Activated CD4-positive, alpha-beta memory T cell treated with anti-CD3 and anti-CD28 coated beads, Interleukin-2, amount 10 ng/mL, durations not matched to agents 7 days and 5 days (primary cell): ENCODE measurements at regions of chr10 and their contacts with region 1.

Region 1: GRCh38 chr10:93376372-93377293 is 105.5 kb downstream of the MYOF start:
- DNase-seq: peak; percentile 42
- H3K4me3 Mint-ChIP-seq: no peak overlapping the region
- H3K27ac Mint-ChIP-seq: no peak overlapping the region
- H3K4me1 Mint-ChIP-seq: peaks cover 39% of the 10 kb centered on the region
- H3K27me3 Mint-ChIP-seq: no peaks in the 10 kb centered on the region

Region 2: DNA sequence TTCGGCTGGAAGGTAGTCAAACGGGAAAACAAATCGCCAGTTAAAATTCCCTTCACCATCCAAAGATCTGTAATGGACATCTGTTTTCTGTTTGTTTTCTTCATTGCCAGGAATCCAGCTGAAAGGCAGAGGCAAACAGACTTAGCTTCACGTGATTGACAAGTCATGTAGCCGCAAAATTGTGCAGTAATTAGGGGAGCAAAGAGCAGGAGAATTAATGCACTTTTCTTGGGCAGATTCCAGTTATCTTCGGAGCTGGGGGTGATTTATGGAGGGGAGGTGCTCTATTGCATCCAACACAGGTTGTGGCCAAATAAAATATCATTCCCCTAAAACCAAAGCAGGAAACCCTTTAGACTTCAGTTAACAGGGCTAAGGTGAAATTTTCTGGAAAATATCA is 56.7 kb before region 1 on chr10:
- CTCF ChIA-PET with region 1: no interaction called
- POLR2A ChIA-PET with region 1: no interaction called
- DNase-seq: no peak
- H3K4me3 Mint-ChIP-seq: no peak overlapping the region
- H3K27ac Mint-ChIP-seq: no peak overlapping the region
- H3K4me1 Mint-ChIP-seq: peaks cover 10% of the 10 kb centered on the region
- H3K27me3 Mint-ChIP-seq: no peaks in the 10 kb centered on the region

Region 3: GRCh38 chr10:93357680-93358079 is 19.0 kb before region 1 on chr10:
- CTCF ChIA-PET with region 1: interaction called, 27 read pairs
- POLR2A ChIA-PET with region 1: no interaction called
- DNase-seq: peak; percentile 30
- H3K4me3 Mint-ChIP-seq: no peak overlapping the region
- H3K27ac Mint-ChIP-seq: no peak overlapping the region
- H3K4me1 Mint-ChIP-seq: peaks cover 5% of the 10 kb centered on the region
- H3K27me3 Mint-ChIP-seq: no peaks in the 10 kb centered on the region

Region 4: DNA sequence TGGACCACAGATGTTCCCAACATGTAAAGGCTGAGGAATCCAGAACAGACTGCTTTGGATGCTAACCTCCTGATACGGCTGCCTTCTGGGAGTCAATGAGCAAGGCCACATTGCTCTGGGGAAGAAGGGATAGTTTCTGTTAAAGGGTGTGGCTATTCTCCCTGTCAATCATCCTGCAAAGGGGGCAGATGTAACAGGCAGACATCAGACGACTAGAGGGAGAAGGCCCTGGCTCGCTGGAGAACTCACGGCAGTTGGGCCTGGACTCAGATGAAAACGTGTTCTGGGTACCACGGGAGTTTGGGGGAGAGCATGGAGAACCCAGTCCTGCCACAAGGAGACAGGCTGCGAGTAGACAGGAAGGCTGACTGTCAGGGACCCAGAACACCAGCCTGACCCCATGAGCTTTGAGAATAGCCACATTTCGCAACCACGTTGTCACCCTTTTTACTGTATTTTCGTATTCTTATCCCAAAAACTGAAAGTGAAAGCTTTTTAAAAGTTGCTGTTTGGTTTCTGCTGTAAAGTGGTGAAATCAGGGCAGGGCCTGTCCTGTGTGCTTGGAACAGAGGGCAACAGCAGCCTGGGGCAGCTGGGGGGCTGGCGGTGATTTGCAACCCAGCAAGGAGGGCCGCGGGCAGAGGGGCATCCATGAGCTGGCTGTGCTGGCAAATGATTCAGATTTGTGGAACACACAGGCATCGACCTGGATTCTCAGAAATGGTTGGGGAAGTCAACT is 10.2 kb after region 1 on chr10:
- CTCF ChIA-PET with region 1: interaction called, 8 read pairs
- POLR2A ChIA-PET with region 1: interaction called, 10 read pairs
- DNase-seq: peak; percentile 29
- H3K4me3 Mint-ChIP-seq: peak overlapping the region; percentile 47
- H3K27ac Mint-ChIP-seq: peak overlapping the region; percentile 83
- H3K4me1 Mint-ChIP-seq: peaks cover 30% of the 10 kb centered on the region
- H3K27me3 Mint-ChIP-seq: no peaks in the 10 kb centered on the region

Region 5: GRCh38 chr10:93413252-93413689 is 36.6 kb after region 1 on chr10:
- CTCF ChIA-PET with region 1: interaction called, 22 read pairs
- POLR2A ChIA-PET with region 1: interaction called, 16 read pairs
- DNase-seq: peak; percentile 64
- H3K4me3 Mint-ChIP-seq: no peak overlapping the region
- H3K27ac Mint-ChIP-seq: peak overlapping the region; percentile 92
- H3K4me1 Mint-ChIP-seq: peaks cover 48% of the 10 kb centered on the region
- H3K27me3 Mint-ChIP-seq: no peaks in the 10 kb centered on the region

Region 6: DNA sequence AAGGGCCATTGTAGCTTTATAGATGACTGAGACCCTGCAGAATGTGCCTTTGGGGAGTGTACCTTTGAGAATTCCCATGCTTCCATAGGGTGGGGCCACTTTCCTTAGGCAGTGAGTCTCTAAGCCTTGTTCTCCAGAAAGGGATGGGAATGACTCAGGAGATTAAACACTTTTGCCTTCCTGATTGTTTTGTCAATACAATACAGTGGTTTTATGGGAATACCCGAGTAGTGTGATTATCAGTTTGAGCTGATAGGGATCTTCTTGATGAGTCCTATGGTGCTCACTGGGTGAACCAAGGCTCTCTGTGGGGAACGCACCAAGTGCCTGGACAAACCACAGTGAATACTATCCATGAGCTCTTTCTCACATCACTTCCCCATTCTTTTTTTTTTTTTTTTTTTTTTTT is 99.2 kb after region 1 on chr10:
- CTCF ChIA-PET with region 1: interaction called, 511 read pairs
- POLR2A ChIA-PET with region 1: interaction called, 82 read pairs
- DNase-seq: no peak
- H3K4me3 Mint-ChIP-seq: no peak overlapping the region
- H3K27ac Mint-ChIP-seq: no peak overlapping the region
- H3K4me1 Mint-ChIP-seq: peaks cover 11% of the 10 kb centered on the region
- H3K27me3 Mint-ChIP-seq: no peaks in the 10 kb centered on the region

Region 7: DNA sequence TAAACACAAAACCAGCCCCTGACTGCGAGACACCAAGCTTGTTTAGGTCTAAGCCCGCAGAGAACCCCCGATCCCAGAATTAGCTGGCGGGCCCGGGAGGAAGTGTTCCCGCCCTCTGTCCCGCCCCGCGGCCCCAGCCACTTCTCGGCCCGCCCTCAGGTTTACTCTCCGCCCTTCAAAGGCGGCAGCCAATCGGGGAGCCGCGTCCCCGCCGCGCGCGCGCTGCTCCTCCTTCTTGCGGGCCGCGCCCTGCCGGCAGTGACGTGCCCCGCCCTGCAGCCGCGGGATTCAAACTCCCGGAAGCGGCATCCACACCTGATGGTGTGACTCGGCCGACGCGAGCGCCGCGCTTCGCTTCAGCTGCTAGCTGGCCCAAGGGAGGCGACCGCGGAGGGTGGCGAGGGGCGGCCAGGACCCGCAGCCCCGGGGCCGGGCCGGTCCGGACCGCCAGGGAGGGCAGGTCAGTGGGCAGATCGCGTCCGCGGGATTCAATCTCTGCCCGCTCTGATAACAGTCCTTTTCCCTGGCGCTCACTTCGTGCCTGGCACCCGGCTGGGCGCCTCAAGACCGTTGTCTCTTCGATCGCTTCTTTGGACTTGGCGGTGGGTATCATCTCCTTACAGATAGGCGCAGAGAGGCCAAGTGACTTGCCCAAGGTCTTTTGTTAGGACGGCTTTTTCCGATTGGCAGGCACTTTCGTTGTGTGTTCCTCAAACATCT is 119.8 kb after region 1 on chr10 and contains the start of gene CEP55:
- CTCF ChIA-PET with region 1: interaction called, 511 read pairs
- POLR2A ChIA-PET with region 1: interaction called, 20 read pairs
- DNase-seq: peak; percentile 98
- H3K4me3 Mint-ChIP-seq: peak within 1 kb of the TSS; percentile 93
- H3K27ac Mint-ChIP-seq: peak within 1 kb of the TSS; percentile 94
- H3K4me1 Mint-ChIP-seq: peaks cover 43% of the 10 kb centered on the region
- H3K27me3 Mint-ChIP-seq: no peaks in the 10 kb centered on the region
- total RNA-seq, gene CEP55: 82.5 to 84.6 TPM

Region 8: DNA sequence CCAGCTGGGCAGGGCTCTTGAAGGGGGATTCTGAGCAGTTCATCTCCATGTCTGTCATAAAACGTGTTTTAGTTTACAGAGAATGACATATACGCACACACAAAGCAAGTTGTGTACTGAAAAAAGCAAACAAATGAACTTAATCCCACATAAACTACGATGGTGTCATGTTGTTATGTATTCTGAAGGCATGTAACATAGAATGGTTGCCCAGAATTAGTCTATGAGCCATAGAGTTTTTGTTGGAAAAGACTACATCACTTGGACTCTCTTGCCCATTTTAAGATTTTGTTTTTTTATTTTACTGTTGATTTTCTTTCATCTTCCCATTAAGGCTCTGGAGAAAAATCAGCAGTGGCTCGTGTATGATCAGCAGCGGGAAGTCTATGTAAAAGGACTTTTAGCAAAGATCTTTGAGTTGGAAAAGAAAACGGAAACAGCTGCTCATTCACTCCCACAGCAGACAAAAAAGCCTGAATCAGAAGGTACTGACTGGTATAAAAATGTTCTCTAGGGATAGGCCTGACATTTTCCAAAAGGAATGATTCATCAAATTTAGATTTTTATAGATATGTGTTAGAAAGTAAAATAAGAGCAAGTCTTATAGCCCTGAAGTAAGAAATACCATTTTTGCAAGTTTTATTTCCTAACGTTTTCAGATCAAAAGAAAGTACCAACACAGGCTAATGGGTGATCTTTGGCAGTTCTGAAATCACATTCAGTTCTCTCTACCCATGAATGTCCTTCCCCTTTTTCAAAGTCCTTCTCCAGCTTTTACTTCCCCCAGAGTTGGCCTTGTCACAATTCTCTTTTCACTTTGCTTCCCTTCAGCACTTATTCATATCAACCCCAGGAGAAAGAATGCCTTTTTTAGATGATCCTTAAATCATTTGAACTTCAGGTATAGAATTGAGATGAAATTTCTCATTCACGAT is 138.7 kb after region 1 on chr10:
- CTCF ChIA-PET with region 1: interaction called, 114 read pairs
- POLR2A ChIA-PET with region 1: interaction called, 4 read pairs
- DNase-seq: no peak
- H3K4me3 Mint-ChIP-seq: no peak overlapping the region
- H3K27ac Mint-ChIP-seq: no peak overlapping the region
- H3K4me1 Mint-ChIP-seq: peaks cover 7% of the 10 kb centered on the region
- H3K27me3 Mint-ChIP-seq: no peaks in the 10 kb centered on the region